Panc1 (cell line): ENCODE measurements at regions of chr4 and their contacts with region 1.

Region 1: DNA sequence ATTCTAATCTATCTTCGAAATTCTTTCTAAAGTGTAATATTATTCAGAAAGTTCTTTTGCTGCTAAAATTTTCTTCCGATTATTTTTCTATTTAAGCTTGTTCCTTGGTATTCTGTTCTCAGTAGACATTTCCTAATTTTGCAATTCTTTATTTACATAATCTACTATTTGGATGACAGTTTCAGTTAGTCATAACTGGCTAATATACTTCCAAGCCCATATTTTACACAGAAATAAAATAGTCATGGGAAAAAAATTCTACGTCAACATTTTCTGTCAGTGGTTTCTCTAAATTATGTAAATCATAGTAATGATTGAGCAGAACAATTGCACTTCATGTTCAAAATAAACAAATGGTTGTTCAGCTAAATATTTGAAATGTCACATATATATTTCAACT is 178.0 kb upstream of the ANKRD50 start:
- DNase-seq: no peak
- ATAC-seq: no peak
- H3K4me3 ChIP-seq: no peak overlapping the region
- H3K27ac ChIP-seq: no peak overlapping the region
- H3K4me1 ChIP-seq: no peaks in the 10 kb centered on the region
- H3K27me3 ChIP-seq: no peaks in the 10 kb centered on the region
- CTCF ChIP-seq: no peak

Region 2: DNA sequence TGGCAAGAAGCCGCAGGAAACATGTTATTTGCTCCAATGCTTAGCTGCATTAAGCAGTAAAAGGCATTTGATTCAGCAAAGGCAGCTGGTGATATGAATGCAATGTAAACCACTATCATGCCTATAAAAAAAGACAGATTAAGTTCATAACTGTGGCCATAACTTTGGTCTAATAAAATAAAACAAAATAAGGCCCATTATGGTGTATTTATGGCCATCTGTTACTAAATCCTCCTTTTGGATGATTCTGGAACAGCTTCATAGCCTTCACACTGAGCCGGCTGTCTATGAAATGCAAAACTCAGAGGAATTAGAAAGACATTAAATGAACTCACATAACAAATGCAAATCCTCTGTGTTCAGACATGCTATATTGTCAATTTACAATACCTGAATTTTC is 200.6 kb after region 1 on chr4:
- CTCF ChIA-PET with region 1: no interaction called
- POLR2A ChIA-PET with region 1: interaction called, 21 read pairs
- in situ Hi-C with region 1: no loop called
- intact Hi-C with region 1: no loop called
- DNase-seq: no peak
- ATAC-seq: no peak
- H3K4me3 ChIP-seq: no peak overlapping the region
- H3K27ac ChIP-seq: no peak overlapping the region
- H3K4me1 ChIP-seq: no peaks in the 10 kb centered on the region
- H3K27me3 ChIP-seq: no peaks in the 10 kb centered on the region
- CTCF ChIP-seq: no peak

Region 3: DNA sequence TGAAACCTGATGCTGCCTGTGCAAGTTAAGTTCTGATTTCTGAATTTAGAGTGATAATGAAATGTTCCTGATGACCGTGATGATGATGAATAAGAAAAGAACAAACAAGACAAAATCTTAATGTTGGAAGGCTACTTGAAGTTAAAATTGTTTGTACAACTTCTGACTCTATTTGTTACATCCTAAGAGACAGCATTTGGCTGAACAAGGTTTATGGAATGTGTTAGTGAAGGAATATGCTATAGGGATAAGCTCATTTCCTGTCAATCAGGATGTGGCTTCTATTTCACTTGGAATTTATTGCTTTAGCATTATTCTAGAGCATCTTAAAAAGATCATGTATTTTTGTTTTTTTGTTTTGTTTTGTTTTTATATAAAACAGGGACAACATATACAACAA is 691.8 kb after region 1 on chr4:
- CTCF ChIA-PET with region 1: no interaction called
- POLR2A ChIA-PET with region 1: interaction called, 15 read pairs
- in situ Hi-C with region 1: no loop called
- intact Hi-C with region 1: no loop called
- DNase-seq: no peak
- ATAC-seq: no peak
- H3K4me3 ChIP-seq: no peak overlapping the region
- H3K27ac ChIP-seq: no peak overlapping the region
- H3K4me1 ChIP-seq: no peaks in the 10 kb centered on the region
- H3K27me3 ChIP-seq: no peaks in the 10 kb centered on the region
- CTCF ChIP-seq: no peak